ENCODE measurements at regions of chr12 and their contacts with region 1.

Region 1: GRCh38 chr12:56636675-56637540 is 6.8 kb upstream of the BAZ2A start:
- DNase-seq: peak; percentile 98
- ATAC-seq: peak; percentile 69
- H3K4me3 ChIP-seq: peak overlapping the region; percentile 57 to 85 (median 78)
- H3K4me3 Mint-ChIP-seq: peak overlapping the region; percentile 89
- H3K27ac ChIP-seq: peak overlapping the region; percentile 75 to 83
- H3K27ac Mint-ChIP-seq: peak overlapping the region; percentile 95
- H3K4me1 ChIP-seq: peaks cover 46 to 53% of the 10 kb centered on the region in 2 donors
- H3K4me1 Mint-ChIP-seq: peaks cover 59% of the 10 kb centered on the region
- H3K27me3 ChIP-seq: no peaks in the 10 kb centered on the region
- H3K27me3 Mint-ChIP-seq: no peaks in the 10 kb centered on the region
- CTCF ChIP-seq: peak; percentile 70

Region 2: GRCh38 chr12:55973598-55974307 is 663.2 kb before region 1 on chr12 and contains the start of gene RAB5B:
- CTCF ChIA-PET with region 1: interaction called, 3 read pairs
- POLR2A ChIA-PET with region 1: interaction called, 6 read pairs
- intact Hi-C with region 1: loop called (anchors 5 kb)
- DNase-seq: peak; percentile 99
- ATAC-seq: peak; percentile 87
- H3K4me3 ChIP-seq: peak within 1 kb of the TSS; percentile 77 to 99 (median 90)
- H3K4me3 Mint-ChIP-seq: no peak within 1 kb of the TSS
- H3K27ac ChIP-seq: peak within 1 kb of the TSS; percentile 85 to 96
- H3K27ac Mint-ChIP-seq: no peak within 1 kb of the TSS
- H3K4me1 ChIP-seq: peaks cover 17% of the 10 kb centered on the region in 2 donors
- H3K4me1 Mint-ChIP-seq: peaks cover 13% of the 10 kb centered on the region
- H3K27me3 ChIP-seq: no peaks in the 10 kb centered on the region
- H3K27me3 Mint-ChIP-seq: no peaks in the 10 kb centered on the region
- CTCF ChIP-seq: no peak
- total RNA-seq, gene RAB5B: 96.1 and 111 TPM in 2 replicates

Region 3: DNA sequence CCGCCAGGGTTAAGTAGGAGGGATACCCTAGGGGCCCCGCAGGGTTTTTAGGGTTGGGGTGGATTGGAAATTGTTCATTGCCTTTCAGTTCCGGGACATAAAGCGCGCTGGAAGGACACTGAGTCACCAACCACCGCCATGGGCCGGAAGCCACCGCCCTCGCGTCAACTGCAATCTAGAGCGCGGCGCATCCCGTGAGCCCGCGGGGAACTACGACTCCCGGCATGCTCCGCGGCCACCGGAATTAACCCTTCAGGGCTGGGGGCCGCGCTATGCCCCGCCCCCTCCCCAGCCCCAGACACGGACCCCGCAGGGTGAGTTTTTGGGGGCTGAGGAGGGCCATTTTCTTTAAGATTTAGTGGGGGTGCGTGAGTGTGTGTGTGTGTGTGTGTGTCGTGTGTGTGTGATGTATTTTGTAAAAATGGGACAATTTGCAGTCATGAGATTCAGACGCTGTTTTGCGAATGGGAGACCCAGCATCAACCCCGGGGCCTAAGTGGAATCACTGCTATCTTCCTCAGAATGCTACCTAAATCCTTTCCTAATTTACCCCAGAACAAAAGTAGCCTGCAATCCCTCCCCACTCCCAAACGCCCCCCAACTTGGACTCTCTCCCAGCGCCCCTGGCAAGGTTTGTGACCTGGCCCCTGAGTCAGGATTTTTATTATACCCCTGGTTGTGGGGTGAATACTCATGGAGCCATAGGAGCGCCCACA is 484.4 kb before region 1 on chr12 and contains the start of gene MYL6B:
- CTCF ChIA-PET with region 1: no interaction called
- POLR2A ChIA-PET with region 1: no interaction called
- intact Hi-C with region 1: no loop called
- DNase-seq: peak; percentile 91
- ATAC-seq: peak; percentile 91
- H3K4me3 ChIP-seq: peak within 1 kb of the TSS; percentile 54 to 89 (median 81)
- H3K4me3 Mint-ChIP-seq: peak within 1 kb of the TSS; percentile 94
- H3K27ac ChIP-seq: peak within 1 kb of the TSS; percentile 74 to 88
- H3K27ac Mint-ChIP-seq: peak within 1 kb of the TSS; percentile 98
- H3K4me1 ChIP-seq: peaks cover 15 to 29% of the 10 kb centered on the region in 2 donors
- H3K4me1 Mint-ChIP-seq: peaks cover 36% of the 10 kb centered on the region
- H3K27me3 ChIP-seq: no peaks in the 10 kb centered on the region
- H3K27me3 Mint-ChIP-seq: no peaks in the 10 kb centered on the region
- CTCF ChIP-seq: no peak
- total RNA-seq, gene MYL6B: 23.7 and 25.7 TPM in 2 replicates

Region 4: DNA sequence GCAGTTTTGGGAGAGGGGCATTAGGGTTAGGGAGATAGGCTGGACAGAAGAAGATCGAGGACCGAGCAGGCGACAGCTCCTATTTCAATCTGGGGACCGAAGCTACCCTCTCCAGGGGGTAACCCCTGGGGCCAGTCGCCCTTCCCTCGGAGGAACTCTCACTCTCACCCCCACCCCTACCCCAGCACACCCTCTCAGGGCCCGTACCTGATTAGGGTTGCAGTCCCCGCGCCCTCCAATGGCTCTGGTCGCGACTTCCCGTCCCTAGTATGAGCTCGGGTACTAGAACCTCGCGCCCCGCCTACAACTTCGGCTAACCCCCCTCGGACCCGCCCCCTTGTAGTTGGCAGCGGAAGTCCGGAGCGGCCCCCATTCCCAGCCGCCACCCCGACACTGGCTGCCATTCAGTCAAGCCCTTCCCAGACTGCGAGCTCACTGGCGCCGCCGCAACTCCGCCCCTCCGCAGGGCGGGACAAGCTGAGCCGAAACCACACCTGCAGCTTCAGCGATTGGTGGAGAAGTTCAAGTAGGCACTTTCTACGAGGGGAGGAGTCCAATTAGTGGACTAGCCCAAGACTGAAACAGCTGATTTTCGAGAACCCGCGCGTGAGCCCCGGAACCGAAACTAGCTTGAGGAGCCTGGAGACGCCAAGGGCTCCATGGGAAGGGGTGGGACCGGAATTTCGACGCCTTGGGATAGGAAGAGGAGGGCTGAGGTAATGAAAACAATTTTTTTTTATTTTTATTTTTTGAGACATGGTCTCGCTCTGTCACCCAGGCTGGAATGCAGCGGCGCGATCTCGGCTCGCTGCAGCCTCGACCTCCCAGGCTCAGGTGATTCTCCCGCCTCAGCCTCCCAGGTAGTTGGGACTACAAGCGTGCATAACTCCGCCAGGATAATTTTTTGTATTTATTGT is 276.8 kb before region 1 on chr12 and contains the start of gene STAT2:
- CTCF ChIA-PET with region 1: no interaction called
- POLR2A ChIA-PET with region 1: no interaction called
- intact Hi-C with region 1: loop called (anchors 10 kb)
- DNase-seq: peak; percentile 99
- ATAC-seq: peak; percentile 93
- H3K4me3 ChIP-seq: peak within 1 kb of the TSS; percentile 55 to 97 (median 76)
- H3K4me3 Mint-ChIP-seq: peak within 1 kb of the TSS; percentile 89
- H3K27ac ChIP-seq: peak within 1 kb of the TSS; percentile 37 to 72
- H3K27ac Mint-ChIP-seq: peak within 1 kb of the TSS; percentile 92
- H3K4me1 ChIP-seq: peaks cover 15 to 24% of the 10 kb centered on the region in 2 donors
- H3K4me1 Mint-ChIP-seq: peaks cover 29% of the 10 kb centered on the region
- H3K27me3 ChIP-seq: no peaks in the 10 kb centered on the region
- H3K27me3 Mint-ChIP-seq: no peaks in the 10 kb centered on the region
- CTCF ChIP-seq: no peak
- total RNA-seq, gene STAT2: 298 and 309 TPM in 2 replicates

Region 5: GRCh38 chr12:56601503-56601902 is 35.4 kb before region 1 on chr12:
- CTCF ChIA-PET with region 1: interaction called, 48 read pairs
- POLR2A ChIA-PET with region 1: interaction called, 5 read pairs
- intact Hi-C with region 1: loop called (anchors 2 kb)
- DNase-seq: peak; percentile 48
- ATAC-seq: peak; percentile 54
- H3K4me3 ChIP-seq: no peak overlapping the region
- H3K4me3 Mint-ChIP-seq: no peak overlapping the region
- H3K27ac ChIP-seq: no peak overlapping the region
- H3K27ac Mint-ChIP-seq: no peak overlapping the region
- H3K4me1 ChIP-seq: no peaks in the 10 kb centered on the region
- H3K4me1 Mint-ChIP-seq: no peaks in the 10 kb centered on the region
- H3K27me3 ChIP-seq: no peaks in the 10 kb centered on the region
- H3K27me3 Mint-ChIP-seq: no peaks in the 10 kb centered on the region
- CTCF ChIP-seq: no peak

Region 6: GRCh38 chr12:56724972-56725722 is 88.2 kb after region 1 on chr12 and contains the start of gene NACA:
- CTCF ChIA-PET with region 1: interaction called, 6 read pairs
- POLR2A ChIA-PET with region 1: interaction called, 10 read pairs
- intact Hi-C with region 1: loop called (anchors 2 kb)
- DNase-seq: peak; percentile 98
- ATAC-seq: peak; percentile 95
- H3K4me3 ChIP-seq: peak within 1 kb of the TSS; percentile 76 to 99 (median 90)
- H3K4me3 Mint-ChIP-seq: peak within 1 kb of the TSS; percentile 95
- H3K27ac ChIP-seq: peak within 1 kb of the TSS; percentile 81 to 92
- H3K27ac Mint-ChIP-seq: peak within 1 kb of the TSS; percentile 95
- H3K4me1 ChIP-seq: peaks cover 47 to 49% of the 10 kb centered on the region in 2 donors
- H3K4me1 Mint-ChIP-seq: peaks cover 59% of the 10 kb centered on the region
- H3K27me3 ChIP-seq: no peaks in the 10 kb centered on the region
- H3K27me3 Mint-ChIP-seq: no peaks in the 10 kb centered on the region
- CTCF ChIP-seq: no peak
- total RNA-seq, gene NACA: 993 and 1,076 TPM in 2 replicates

Region 7: GRCh38 chr12:57088459-57089248 is 451.7 kb after region 1 on chr12 and contains the start of gene NAB2:
- CTCF ChIA-PET with region 1: no interaction called
- POLR2A ChIA-PET with region 1: no interaction called
- intact Hi-C with region 1: loop called (anchors 10 kb)
- DNase-seq: peak; percentile 96
- ATAC-seq: peak; percentile 62
- H3K4me3 ChIP-seq: peak within 1 kb of the TSS; percentile 75 to 100 (median 80)
- H3K4me3 Mint-ChIP-seq: peak within 1 kb of the TSS; percentile 92
- H3K27ac ChIP-seq: peak within 1 kb of the TSS; percentile 98 to 99
- H3K27ac Mint-ChIP-seq: peak within 1 kb of the TSS; percentile 91
- H3K4me1 ChIP-seq: peaks cover 18 to 40% of the 10 kb centered on the region in 2 donors
- H3K4me1 Mint-ChIP-seq: peaks cover 55% of the 10 kb centered on the region
- H3K27me3 ChIP-seq: no peaks in the 10 kb centered on the region
- H3K27me3 Mint-ChIP-seq: no peaks in the 10 kb centered on the region
- CTCF ChIP-seq: no peak
- total RNA-seq, gene NAB2: 49.0 and 52.1 TPM in 2 replicates